ENCODE measurements at regions of chr11 and their contacts with region 1.

Region 1: DNA sequence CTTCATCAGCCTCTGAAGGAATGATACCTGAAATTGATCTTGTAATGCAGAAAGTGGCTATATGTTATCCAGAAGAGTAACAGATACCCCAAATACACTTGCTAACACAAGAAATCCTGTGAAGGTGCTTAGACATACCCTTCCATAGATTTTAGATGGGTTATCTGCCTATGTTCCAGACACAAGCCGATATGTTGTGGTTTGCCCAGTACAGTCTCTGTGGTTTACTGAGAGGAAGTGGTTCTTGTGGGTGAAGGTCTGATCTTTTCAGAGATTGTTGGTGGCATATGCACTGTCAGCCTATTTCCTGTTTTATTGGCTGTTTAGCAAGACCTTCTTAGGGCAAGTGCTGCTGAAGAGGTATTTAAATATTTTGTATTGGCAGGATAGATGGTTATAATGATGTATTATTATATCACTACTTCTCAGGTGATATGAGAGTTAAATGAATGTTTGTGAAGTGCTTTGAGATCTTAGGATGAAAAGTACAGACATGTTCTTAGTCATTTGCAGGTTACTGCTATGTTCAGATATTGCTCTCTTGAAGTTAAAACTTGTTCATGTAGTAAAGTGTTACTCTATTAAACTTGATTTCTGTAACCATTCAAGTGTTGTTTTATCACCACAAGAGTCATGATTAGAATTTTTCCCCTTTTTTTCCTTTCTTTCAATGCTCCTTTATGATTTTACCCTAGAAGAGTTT is 8.2 kb downstream of the ARHGEF12 start:
- DNase-seq: no peak
- ATAC-seq: no peak
- H3K4me3 ChIP-seq: no peak overlapping the region
- H3K27ac ChIP-seq: peak overlapping the region; percentile 13
- H3K4me1 ChIP-seq: peaks cover 7% of the 10 kb centered on the region
- H3K27me3 ChIP-seq: no peaks in the 10 kb centered on the region

Region 2: DNA sequence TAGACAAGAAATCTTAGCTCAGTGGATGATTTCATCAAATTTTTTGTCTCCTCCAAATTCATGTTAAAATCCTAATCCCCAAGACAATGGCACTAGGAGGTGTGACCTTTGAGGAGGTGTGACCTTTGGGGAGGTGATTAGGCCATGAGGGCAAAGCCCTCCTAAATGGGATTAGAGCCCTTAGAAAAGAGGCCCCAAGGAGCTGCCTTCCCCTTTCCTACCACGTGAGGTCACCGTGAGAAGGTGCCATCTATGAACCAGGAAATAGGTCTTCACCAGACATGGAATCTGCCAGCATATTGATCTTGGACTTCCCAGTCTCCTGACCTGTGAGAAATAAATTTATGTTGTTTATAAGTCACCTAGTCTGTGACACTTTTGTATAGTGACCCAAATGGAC is 345.2 kb before region 1 on chr11:
- intact Hi-C with region 1: no loop called
- DNase-seq: no peak
- ATAC-seq: no peak
- H3K4me3 ChIP-seq: no peak overlapping the region
- H3K27ac ChIP-seq: no peak overlapping the region
- H3K4me1 ChIP-seq: no peaks in the 10 kb centered on the region
- H3K27me3 ChIP-seq: no peaks in the 10 kb centered on the region

Region 3: DNA sequence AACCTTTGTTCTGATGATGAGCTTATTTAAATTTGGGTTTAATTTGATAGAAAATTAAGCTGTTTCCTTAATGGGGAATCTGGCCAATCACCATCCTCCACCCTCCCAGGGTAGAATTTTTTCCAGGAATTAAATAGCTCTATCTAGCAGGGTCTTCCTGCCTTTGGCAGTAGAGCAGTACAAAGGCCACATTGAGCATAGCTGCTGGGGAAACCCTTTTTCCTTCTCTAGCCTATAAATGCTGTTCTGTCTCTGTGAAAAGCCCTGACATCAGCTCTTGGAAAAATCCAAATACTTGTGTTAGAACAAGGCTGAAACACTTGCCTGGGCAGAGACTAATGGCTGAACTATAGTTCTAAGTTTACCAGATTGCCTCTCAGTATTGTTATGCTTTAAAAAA is 46.8 kb after region 1 on chr11:
- intact Hi-C with region 1: loop called in 1 of 4 experiments (anchors 5 kb)
- DNase-seq: no peak
- ATAC-seq: peak; percentile 73 to 85
- H3K4me3 ChIP-seq: no peak overlapping the region
- H3K27ac ChIP-seq: no peak overlapping the region
- H3K4me1 ChIP-seq: peaks cover 2% of the 10 kb centered on the region
- H3K27me3 ChIP-seq: no peaks in the 10 kb centered on the region

Region 4: DNA sequence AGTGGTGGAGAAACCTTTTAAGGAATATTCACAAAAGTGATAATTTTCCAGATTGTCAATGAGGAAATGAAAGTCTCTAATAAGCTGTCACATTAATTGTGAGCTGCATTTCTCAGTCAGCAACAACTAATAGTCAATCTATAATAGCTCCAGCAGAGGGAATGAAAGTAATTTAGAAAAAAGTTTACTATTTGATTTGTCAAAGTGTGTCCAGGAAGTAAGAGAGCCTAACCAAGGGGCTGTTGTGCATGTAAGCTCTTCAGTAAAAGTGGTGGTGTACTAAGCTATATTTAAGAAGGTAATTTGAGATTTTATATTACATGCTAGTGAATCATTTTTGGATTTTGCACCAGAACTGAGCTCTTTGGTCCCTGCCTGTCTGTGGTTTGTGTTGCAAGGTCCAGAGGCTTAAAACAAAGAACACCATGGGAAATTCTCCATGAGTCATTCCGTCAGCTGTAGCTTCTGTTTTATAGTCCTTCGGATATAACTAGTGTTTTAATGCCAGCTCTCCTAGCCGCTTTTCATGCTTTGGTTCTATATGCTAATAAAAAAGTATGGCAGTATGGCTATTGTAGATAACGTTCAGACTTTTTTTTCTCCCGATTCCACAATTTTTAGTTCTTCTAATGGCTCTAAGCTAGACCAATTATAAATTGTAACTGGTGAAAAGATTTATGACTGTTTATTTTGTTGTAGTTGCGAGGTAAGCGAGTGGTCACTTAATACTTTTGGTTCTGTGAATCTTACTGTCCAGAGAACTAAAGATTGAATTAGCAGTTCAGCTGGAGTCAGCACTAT is 56.3 kb after region 1 on chr11:
- intact Hi-C with region 1: loop called in 1 of 4 experiments (anchors 10 kb)
- DNase-seq: no peak
- ATAC-seq: peak; percentile 85 to 90
- H3K4me3 ChIP-seq: no peak overlapping the region
- H3K27ac ChIP-seq: peak overlapping the region; percentile 27
- H3K4me1 ChIP-seq: peaks cover 1% of the 10 kb centered on the region
- H3K27me3 ChIP-seq: no peaks in the 10 kb centered on the region

Region 5: GRCh38 chr11:120446802-120447201 is 102.3 kb after region 1 on chr11:
- intact Hi-C with region 1: no loop called
- DNase-seq: no peak
- ATAC-seq: no peak
- H3K4me3 ChIP-seq: no peak overlapping the region
- H3K27ac ChIP-seq: no peak overlapping the region
- H3K4me1 ChIP-seq: no peaks in the 10 kb centered on the region
- H3K27me3 ChIP-seq: no peaks in the 10 kb centered on the region

Measured in right cardiac atrium (tissue), 5 donors.